PC-9 (cell line): ENCODE measurements at regions of chr4 and their contacts with region 1.

Region 1: GRCh38 chr4:184825896-184826690 is at the start of gene ACSL1:
- DNase-seq: peak in 1 of 2 experiments; percentile 70
- H3K4me3 ChIP-seq: peak within 1 kb of the TSS; percentile 66
- H3K27ac ChIP-seq: no peak within 1 kb of the TSS
- H3K4me1 ChIP-seq: peaks cover 24% of the 10 kb centered on the region; the same call in 1 of the 2 replicates
- H3K27me3 ChIP-seq: no peaks in the 10 kb centered on the region
- CTCF ChIP-seq: no peak
- total RNA-seq, gene ACSL1: 50.1 and 96.6 TPM in 2 replicates

Region 2: GRCh38 chr4:184851200-184851541 is 25.1 kb after region 1 on chr4:
- CTCF ChIA-PET with region 1: no interaction called
- POLR2A ChIA-PET with region 1: no interaction called
- intact Hi-C with region 1: no loop called
- DNase-seq: no peak
- H3K4me3 ChIP-seq: no peak overlapping the region
- H3K27ac ChIP-seq: no peak overlapping the region
- H3K4me1 ChIP-seq: peaks cover 2% of the 10 kb centered on the region; the same call in 1 of the 2 replicates
- H3K27me3 ChIP-seq: no peaks in the 10 kb centered on the region
- CTCF ChIP-seq: no peak

Region 3: DNA sequence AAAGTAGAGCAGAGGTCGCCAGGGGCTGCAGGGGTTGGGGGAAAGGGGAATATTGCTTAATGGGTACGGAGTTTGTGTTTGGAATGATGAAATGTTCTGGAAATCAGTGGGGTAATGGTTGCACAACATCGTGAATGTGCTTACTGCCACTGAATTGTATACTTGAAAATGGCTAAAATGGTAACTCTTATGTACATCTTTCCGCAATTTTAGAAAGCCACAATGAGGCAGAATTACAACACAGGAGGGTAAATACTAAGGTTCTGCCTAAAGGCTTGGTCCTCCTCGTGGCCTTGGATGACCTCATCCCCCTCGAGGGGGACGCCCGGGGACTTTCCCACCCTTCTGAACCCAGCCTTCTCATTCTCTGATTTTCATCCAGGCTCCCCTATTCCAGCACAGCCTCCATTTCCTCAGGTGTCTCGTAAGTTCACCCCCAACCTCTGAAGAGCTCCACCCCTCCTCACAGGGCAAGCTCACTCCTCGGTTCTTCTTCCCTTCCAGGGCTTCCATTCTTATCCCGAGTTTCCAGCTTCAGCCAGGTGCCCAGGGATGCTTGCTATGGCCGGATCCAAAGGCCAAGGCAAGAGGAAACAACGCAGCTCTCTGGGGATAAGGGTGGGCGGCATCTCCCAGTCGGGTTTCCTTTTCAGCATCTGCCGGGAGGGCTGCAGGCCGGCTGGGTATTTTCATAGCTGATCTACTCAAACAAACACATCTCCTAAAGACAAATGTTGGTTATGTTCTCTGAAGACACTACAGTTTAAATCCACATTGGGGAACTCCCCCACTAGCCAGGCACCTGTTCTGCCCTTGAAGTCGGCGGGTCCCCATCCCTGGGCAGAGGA is 71.0 kb after region 1 on chr4:
- CTCF ChIA-PET with region 1: no interaction called
- POLR2A ChIA-PET with region 1: no interaction called
- intact Hi-C with region 1: loop called (anchors 10 kb)
- DNase-seq: no peak
- H3K4me3 ChIP-seq: no peak overlapping the region
- H3K27ac ChIP-seq: peak overlapping the region; percentile 46
- H3K4me1 ChIP-seq: peaks cover 58% of the 10 kb centered on the region
- H3K27me3 ChIP-seq: no peaks in the 10 kb centered on the region
- CTCF ChIP-seq: no peak

Region 4: GRCh38 chr4:184983672-184984356 is 157.7 kb after region 1 on chr4:
- CTCF ChIA-PET with region 1: no interaction called
- POLR2A ChIA-PET with region 1: no interaction called
- intact Hi-C with region 1: loop called (anchors 10 kb)
- DNase-seq: peak in 1 of 2 experiments; percentile 57
- H3K4me3 ChIP-seq: no peak overlapping the region
- H3K27ac ChIP-seq: no peak overlapping the region
- H3K4me1 ChIP-seq: no peaks in the 10 kb centered on the region
- H3K27me3 ChIP-seq: no peaks in the 10 kb centered on the region
- CTCF ChIP-seq: no peak; the same call in 1 of the 2 replicates